ENCODE measurements at regions of chr12 and their contacts with region 1.

Region 1: DNA sequence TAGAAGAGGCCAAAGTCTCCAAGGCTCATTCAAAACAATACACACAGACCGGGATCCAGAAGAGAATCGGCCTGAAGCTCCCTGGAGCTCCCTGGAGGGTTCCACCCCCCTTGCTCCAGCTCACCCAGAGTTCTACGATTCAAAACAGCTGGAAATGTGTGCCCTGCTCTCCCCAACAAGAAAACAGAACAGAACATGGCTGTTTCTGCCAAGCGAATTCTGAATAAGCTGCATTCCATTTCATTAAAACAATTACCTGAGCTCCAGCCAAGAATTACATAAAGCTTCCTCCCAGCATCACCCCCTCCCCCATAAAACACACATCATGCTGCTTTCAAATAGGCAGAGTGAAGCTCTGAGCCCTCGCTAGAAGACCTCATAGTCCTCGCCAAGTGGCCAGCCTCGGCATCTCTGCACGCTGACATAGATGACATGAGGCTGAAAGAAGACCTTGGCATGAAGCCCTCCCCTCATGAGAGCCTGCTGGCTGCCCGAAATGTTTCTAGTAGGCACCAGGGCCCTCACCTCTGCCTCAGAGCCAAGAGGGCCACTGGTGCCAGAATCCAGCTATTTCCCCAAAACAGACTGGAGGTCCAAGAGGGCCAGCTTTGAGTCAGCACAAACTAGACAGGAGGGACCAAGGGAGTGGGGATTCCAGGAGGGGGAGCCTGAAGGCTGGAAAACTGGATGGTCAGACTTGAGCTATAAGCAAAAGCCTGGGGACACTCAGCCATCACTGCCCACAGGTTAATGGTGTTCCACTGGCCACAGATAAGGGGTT is 8.3 kb downstream of the PXN start:
- DNase-seq: no peak
- H3K4me3 ChIP-seq: no peak overlapping the region
- H3K4me3 Mint-ChIP-seq: no peak overlapping the region
- H3K27ac Mint-ChIP-seq: peak overlapping the region; percentile 76
- H3K4me1 ChIP-seq: peaks cover 27% of the 10 kb centered on the region
- H3K4me1 Mint-ChIP-seq: peaks cover 21% of the 10 kb centered on the region
- H3K27me3 ChIP-seq: no peaks in the 10 kb centered on the region
- H3K27me3 Mint-ChIP-seq: no peaks in the 10 kb centered on the region
- CTCF ChIP-seq: no peak

Region 2: GRCh38 chr12:120142231-120142877 is 114.9 kb before region 1 on chr12:
- CTCF ChIA-PET with region 1: no interaction called
- POLR2A ChIA-PET with region 1: no interaction called
- intact Hi-C with region 1: no loop called
- DNase-seq: no peak
- H3K4me3 ChIP-seq: no peak overlapping the region
- H3K4me3 Mint-ChIP-seq: no peak overlapping the region
- H3K27ac Mint-ChIP-seq: no peak overlapping the region
- H3K4me1 ChIP-seq: no peaks in the 10 kb centered on the region
- H3K4me1 Mint-ChIP-seq: no peaks in the 10 kb centered on the region
- H3K27me3 ChIP-seq: no peaks in the 10 kb centered on the region
- H3K27me3 Mint-ChIP-seq: no peaks in the 10 kb centered on the region
- CTCF ChIP-seq: no peak

Region 3: DNA sequence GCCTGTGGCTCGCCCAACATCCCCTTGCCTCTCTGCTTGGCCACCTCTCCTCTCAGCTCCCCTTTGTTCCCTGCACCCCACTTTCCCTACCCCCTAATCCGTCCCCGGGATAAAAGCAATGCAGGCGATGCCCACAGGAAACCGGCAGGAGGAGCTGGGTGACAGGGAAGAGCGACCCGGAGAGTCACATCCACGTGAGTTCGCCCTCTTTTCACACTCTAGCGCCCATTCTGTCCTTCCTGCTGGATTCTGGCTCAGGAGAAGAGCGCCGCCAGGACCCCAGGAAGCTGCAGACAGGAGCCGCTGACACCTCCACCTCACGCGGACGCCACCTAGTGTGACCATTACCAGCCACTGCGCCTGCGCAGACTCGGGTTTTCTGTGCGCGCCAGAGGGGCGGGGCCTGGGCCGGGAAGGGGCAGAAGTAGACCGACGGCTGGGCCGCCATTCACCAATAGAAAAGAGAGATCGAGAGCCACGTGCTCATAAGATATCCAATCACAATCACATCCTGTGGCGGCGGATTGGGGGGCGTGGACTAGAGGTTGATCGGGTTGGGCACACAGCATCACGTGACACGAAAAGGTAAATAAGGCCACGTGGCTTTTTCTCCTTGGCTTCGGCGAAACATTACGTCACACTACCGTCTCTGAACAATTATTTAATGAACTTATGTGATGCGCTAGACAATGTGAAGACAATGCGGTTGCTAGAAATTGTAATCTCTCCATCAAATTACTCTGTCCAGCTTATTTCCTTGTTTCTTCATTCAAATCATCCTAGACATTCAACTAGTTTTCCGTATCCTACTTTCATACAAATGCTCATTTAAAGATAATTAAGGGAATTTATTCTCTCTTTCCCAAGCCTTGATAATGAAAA is 60.2 kb after region 1 on chr12:
- CTCF ChIA-PET with region 1: no interaction called
- POLR2A ChIA-PET with region 1: no interaction called
- intact Hi-C with region 1: no loop called
- DNase-seq: peak; percentile 100
- H3K4me3 ChIP-seq: peak overlapping the region; percentile 49
- H3K4me3 Mint-ChIP-seq: peak overlapping the region; percentile 95
- H3K27ac Mint-ChIP-seq: peak overlapping the region; percentile 99
- H3K4me1 ChIP-seq: peaks cover 22% of the 10 kb centered on the region
- H3K4me1 Mint-ChIP-seq: peaks cover 13% of the 10 kb centered on the region
- H3K27me3 ChIP-seq: no peaks in the 10 kb centered on the region
- H3K27me3 Mint-ChIP-seq: no peaks in the 10 kb centered on the region
- CTCF ChIP-seq: peak; percentile 52 to 77

Region 4: DNA sequence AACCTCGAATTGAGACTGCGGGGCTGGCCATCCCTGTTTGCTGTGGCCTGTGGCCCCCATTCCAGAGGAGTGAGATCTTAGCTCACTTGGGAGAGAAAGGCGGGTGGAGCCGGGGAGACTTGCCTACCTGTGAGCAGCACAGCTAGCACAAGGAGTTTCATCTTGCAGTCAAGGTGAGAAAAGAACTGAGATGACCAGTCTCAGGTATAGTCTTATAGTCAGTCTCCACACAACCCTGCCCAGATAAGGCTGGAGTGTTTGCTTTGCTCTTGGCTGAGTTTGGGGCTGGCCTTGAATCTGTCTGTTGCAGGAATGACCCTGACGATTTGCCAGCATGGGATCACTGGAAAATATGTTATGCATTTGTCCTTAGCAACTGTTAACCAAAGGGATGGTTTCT is 70.4 kb after region 1 on chr12 and contains the start of gene PLA2G1B:
- CTCF ChIA-PET with region 1: no interaction called
- POLR2A ChIA-PET with region 1: no interaction called
- intact Hi-C with region 1: no loop called
- DNase-seq: no peak
- H3K4me3 ChIP-seq: no peak within 1 kb of the TSS
- H3K4me3 Mint-ChIP-seq: no peak within 1 kb of the TSS
- H3K27ac Mint-ChIP-seq: no peak within 1 kb of the TSS
- H3K4me1 ChIP-seq: no peaks in the 10 kb centered on the region
- H3K4me1 Mint-ChIP-seq: peaks cover 7% of the 10 kb centered on the region
- H3K27me3 ChIP-seq: no peaks in the 10 kb centered on the region
- H3K27me3 Mint-ChIP-seq: no peaks in the 10 kb centered on the region
- CTCF ChIP-seq: no peak
- total RNA-seq, gene PLA2G1B: not detected in 2 replicates

Region 5: DNA sequence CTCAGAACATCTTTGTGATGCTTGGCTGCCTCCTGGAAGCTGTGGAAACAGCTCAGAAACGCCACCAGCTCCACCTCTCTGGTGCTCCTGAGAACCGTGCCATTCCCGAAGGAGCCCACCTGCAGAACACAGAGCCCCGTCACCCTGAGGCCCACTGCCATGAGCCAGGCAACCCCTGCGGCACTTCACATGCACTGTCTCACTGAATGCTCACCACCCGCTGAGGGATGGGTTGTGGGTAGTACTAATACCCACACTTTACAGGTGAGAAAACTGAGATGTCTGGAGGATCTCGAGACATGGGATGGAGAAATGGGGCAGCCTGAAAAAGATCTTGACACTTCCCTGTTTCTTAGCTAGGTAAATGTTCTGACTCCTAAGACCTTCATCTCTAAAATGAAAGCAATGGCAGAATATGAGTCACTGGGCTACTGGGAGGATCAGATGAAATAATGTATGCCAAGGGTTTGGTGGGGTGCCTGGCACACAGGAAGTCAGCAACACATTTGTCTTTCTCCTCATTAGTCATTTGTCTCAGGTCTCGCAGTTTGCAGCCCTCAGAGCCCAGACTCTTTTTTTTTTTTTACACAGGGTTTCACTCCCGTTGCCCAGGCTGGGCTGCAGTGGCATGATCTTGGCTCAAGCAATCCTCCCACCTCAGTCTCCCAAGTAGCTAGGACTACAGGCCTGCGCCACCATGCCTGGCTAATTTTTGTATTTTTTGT is 776.6 kb after region 1 on chr12:
- CTCF ChIA-PET with region 1: no interaction called
- POLR2A ChIA-PET with region 1: interaction called, 12 read pairs
- intact Hi-C with region 1: no loop called
- DNase-seq: no peak
- H3K4me3 ChIP-seq: no peak overlapping the region
- H3K4me3 Mint-ChIP-seq: no peak overlapping the region
- H3K27ac Mint-ChIP-seq: no peak overlapping the region
- H3K4me1 ChIP-seq: no peaks in the 10 kb centered on the region; the same call in 1 of the 2 replicates
- H3K4me1 Mint-ChIP-seq: no peaks in the 10 kb centered on the region
- H3K27me3 ChIP-seq: no peaks in the 10 kb centered on the region
- H3K27me3 Mint-ChIP-seq: no peaks in the 10 kb centered on the region
- CTCF ChIP-seq: no peak

Measured in Caco-2 (cell line).